B cell (primary cell): ENCODE measurements at regions of chr2 and their contacts with region 1.

Region 1: GRCh38 chr2:65031341-65032018 is 24.7 kb upstream of the CEP68 start:
- DNase-seq: peak; percentile 68
- ATAC-seq: peak; percentile 12
- H3K4me3 ChIP-seq: peak overlapping the region; percentile 9 to 63 (median 44)
- H3K4me3 Mint-ChIP-seq: peak overlapping the region; percentile 89
- H3K27ac ChIP-seq: peak overlapping the region; percentile 67 to 87
- H3K27ac Mint-ChIP-seq: peak overlapping the region; percentile 87
- H3K4me1 ChIP-seq: peaks cover 60 to 71% of the 10 kb centered on the region in 2 donors
- H3K4me1 Mint-ChIP-seq: peaks cover 65% of the 10 kb centered on the region
- H3K27me3 ChIP-seq: no peaks in the 10 kb centered on the region
- H3K27me3 Mint-ChIP-seq: no peaks in the 10 kb centered on the region
- CTCF ChIP-seq: no peak

Region 2: DNA sequence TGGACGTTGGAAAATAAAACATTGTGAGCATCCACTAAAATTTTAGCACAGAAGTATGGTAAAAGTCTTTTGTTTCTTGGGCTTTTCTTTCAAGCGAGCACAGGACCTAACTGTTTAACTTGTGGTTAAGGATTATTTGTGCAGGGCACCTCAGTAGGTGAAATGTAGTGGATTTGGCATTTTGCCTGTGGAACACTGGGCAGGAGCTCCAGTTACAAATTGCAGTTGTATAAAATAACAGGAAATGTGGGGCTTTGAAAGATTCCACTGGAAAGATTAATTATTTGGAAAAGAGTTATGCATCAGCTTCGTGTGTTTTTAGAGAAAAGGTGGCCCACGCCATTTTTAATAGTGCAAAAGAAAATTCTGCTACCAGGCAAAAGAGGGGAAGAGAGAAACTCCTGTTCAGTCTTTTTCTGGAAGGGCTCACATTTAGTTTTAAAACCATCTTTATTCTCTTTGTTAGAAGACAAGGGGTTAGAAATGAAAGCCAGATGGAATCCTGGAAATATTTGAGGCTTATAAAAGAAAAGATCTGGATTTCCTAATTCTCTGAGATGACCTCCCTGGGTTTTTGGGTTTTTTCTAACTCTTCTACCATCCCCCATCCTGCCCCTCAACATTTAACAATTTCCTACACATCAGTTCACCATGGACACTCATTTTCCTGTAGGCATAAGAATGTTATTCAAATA is 233.5 kb before region 1 on chr2:
- CTCF ChIA-PET with region 1: no interaction called
- POLR2A ChIA-PET with region 1: no interaction called
- intact Hi-C with region 1: no loop called
- DNase-seq: no peak
- ATAC-seq: no peak
- H3K4me3 ChIP-seq: no peak overlapping the region
- H3K4me3 Mint-ChIP-seq: no peak overlapping the region
- H3K27ac ChIP-seq: no peak overlapping the region
- H3K27ac Mint-ChIP-seq: no peak overlapping the region
- H3K4me1 ChIP-seq: no peaks in the 10 kb centered on the region
- H3K4me1 Mint-ChIP-seq: no peaks in the 10 kb centered on the region
- H3K27me3 ChIP-seq: no peaks in the 10 kb centered on the region
- H3K27me3 Mint-ChIP-seq: no peaks in the 10 kb centered on the region
- CTCF ChIP-seq: no peak

Region 3: DNA sequence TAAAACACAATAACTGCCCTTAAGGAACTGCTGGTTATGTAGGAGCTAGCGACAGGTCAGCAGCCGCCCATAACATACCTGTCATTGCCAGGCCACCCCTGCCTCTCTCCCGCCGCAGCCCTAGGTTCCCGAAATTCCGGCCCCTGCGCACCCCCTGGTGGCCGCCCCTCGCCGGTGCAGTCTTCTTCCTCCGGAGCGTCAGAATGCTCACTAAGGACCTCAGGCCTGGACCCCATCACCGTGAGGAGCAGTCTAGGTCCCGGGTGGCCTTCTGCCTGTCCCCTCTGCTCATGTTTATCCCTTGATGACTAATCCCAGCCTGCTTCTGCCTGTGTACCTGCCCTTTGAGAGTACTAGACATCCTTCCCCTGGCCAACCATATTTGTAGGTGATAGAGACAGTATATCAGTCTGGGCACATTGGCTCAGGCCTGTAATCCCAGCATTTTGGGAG is 158.0 kb before region 1 on chr2:
- CTCF ChIA-PET with region 1: no interaction called
- POLR2A ChIA-PET with region 1: no interaction called
- intact Hi-C with region 1: loop called (anchors 5 kb)
- DNase-seq: peak; percentile 87
- ATAC-seq: peak; percentile 99
- H3K4me3 ChIP-seq: peak overlapping the region in 3 of 5 experiments; percentile 11 to 35 (median 29)
- H3K4me3 Mint-ChIP-seq: peak overlapping the region; percentile 67
- H3K27ac ChIP-seq: no peak overlapping the region
- H3K27ac Mint-ChIP-seq: no peak overlapping the region
- H3K4me1 ChIP-seq: peaks cover 7 to 9% of the 10 kb centered on the region in 2 donors
- H3K4me1 Mint-ChIP-seq: peaks cover 7% of the 10 kb centered on the region
- H3K27me3 ChIP-seq: no peaks in the 10 kb centered on the region
- H3K27me3 Mint-ChIP-seq: no peaks in the 10 kb centered on the region
- CTCF ChIP-seq: peak; percentile 93

Region 4: GRCh38 chr2:64932371-64933216 is 98.9 kb before region 1 on chr2:
- CTCF ChIA-PET with region 1: interaction called, 10 read pairs
- POLR2A ChIA-PET with region 1: interaction called, 6 read pairs
- intact Hi-C with region 1: loop called (anchors 1 kb)
- DNase-seq: peak; percentile 68
- ATAC-seq: peak; percentile 75
- H3K4me3 ChIP-seq: peak overlapping the region; percentile 51 to 66 (median 59)
- H3K4me3 Mint-ChIP-seq: peak overlapping the region; percentile 83
- H3K27ac ChIP-seq: peak overlapping the region; percentile 74 to 87
- H3K27ac Mint-ChIP-seq: peak overlapping the region; percentile 83
- H3K4me1 ChIP-seq: peaks cover 92 to 95% of the 10 kb centered on the region in 2 donors
- H3K4me1 Mint-ChIP-seq: peaks cover 88% of the 10 kb centered on the region
- H3K27me3 ChIP-seq: no peaks in the 10 kb centered on the region
- H3K27me3 Mint-ChIP-seq: no peaks in the 10 kb centered on the region
- CTCF ChIP-seq: no peak

Region 5: GRCh38 chr2:64988420-64989125 is 42.9 kb before region 1 on chr2:
- CTCF ChIA-PET with region 1: interaction called, 6 read pairs
- POLR2A ChIA-PET with region 1: interaction called, 5 read pairs
- intact Hi-C with region 1: loop called (anchors 2 kb)
- DNase-seq: peak; percentile 75
- ATAC-seq: peak; percentile 33
- H3K4me3 ChIP-seq: peak overlapping the region; percentile 53 to 87 (median 81)
- H3K4me3 Mint-ChIP-seq: peak overlapping the region; percentile 92
- H3K27ac ChIP-seq: peak overlapping the region in 1 of 2 donors; percentile 53
- H3K27ac Mint-ChIP-seq: peak overlapping the region; percentile 84
- H3K4me1 ChIP-seq: peaks cover 17 to 24% of the 10 kb centered on the region in 2 donors
- H3K4me1 Mint-ChIP-seq: peaks cover 37% of the 10 kb centered on the region
- H3K27me3 ChIP-seq: no peaks in the 10 kb centered on the region
- H3K27me3 Mint-ChIP-seq: no peaks in the 10 kb centered on the region
- CTCF ChIP-seq: peak; percentile 48

Region 6: GRCh38 chr2:65017335-65017734 is 14.1 kb before region 1 on chr2:
- CTCF ChIA-PET with region 1: interaction called, 115 read pairs
- POLR2A ChIA-PET with region 1: interaction called, 9 read pairs
- intact Hi-C with region 1: loop called (anchors 1 kb)
- DNase-seq: peak; percentile 73
- ATAC-seq: peak; percentile 82
- H3K4me3 ChIP-seq: no peak overlapping the region
- H3K4me3 Mint-ChIP-seq: peak overlapping the region; percentile 55
- H3K27ac ChIP-seq: no peak overlapping the region
- H3K27ac Mint-ChIP-seq: peak overlapping the region; percentile 72
- H3K4me1 ChIP-seq: peaks cover 29 to 35% of the 10 kb centered on the region in 2 donors
- H3K4me1 Mint-ChIP-seq: peaks cover 48% of the 10 kb centered on the region
- H3K27me3 ChIP-seq: no peaks in the 10 kb centered on the region
- H3K27me3 Mint-ChIP-seq: no peaks in the 10 kb centered on the region
- CTCF ChIP-seq: peak; percentile 69

Region 7: GRCh38 chr2:65045651-65046050 is 14.2 kb after region 1 on chr2:
- CTCF ChIA-PET with region 1: interaction called, 8 read pairs
- POLR2A ChIA-PET with region 1: interaction called, 19 read pairs
- intact Hi-C with region 1: loop called (anchors 2 kb)
- DNase-seq: no peak
- ATAC-seq: no peak
- H3K4me3 ChIP-seq: no peak overlapping the region
- H3K4me3 Mint-ChIP-seq: no peak overlapping the region
- H3K27ac ChIP-seq: no peak overlapping the region
- H3K27ac Mint-ChIP-seq: no peak overlapping the region
- H3K4me1 ChIP-seq: peaks cover under 1% of the 10 kb centered on the region in 2 donors
- H3K4me1 Mint-ChIP-seq: peaks cover 12% of the 10 kb centered on the region
- H3K27me3 ChIP-seq: no peaks in the 10 kb centered on the region
- H3K27me3 Mint-ChIP-seq: no peaks in the 10 kb centered on the region
- CTCF ChIP-seq: no peak

Region 8: DNA sequence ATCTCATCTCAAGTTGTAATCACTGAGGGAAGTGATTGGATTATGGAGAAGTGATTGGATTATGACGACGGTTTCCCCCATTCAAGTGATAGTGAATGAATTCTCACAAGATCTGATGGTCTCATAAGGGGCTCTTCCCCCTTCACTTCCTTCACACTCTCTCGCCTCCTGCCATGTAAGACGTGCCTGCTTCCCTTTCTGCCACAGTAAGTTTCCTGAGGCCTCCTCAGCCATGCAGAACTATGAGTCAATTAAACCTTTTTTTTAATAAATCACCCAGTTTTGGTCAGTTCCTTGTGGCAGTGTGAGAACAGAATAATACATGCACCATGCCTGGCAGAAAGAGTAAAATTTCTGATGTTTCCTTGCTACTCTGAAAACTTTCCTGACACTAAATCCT is 61.3 kb after region 1 on chr2:
- CTCF ChIA-PET with region 1: no interaction called
- POLR2A ChIA-PET with region 1: no interaction called
- intact Hi-C with region 1: no loop called
- DNase-seq: no peak
- ATAC-seq: no peak
- H3K4me3 ChIP-seq: no peak overlapping the region
- H3K4me3 Mint-ChIP-seq: no peak overlapping the region
- H3K27ac ChIP-seq: no peak overlapping the region
- H3K27ac Mint-ChIP-seq: no peak overlapping the region
- H3K4me1 ChIP-seq: no peaks in the 10 kb centered on the region
- H3K4me1 Mint-ChIP-seq: peaks cover 3% of the 10 kb centered on the region
- H3K27me3 ChIP-seq: no peaks in the 10 kb centered on the region
- H3K27me3 Mint-ChIP-seq: no peaks in the 10 kb centered on the region
- CTCF ChIP-seq: no peak